ENCODE measurements at regions of chr3 and their contacts with region 1.

Region 1: GRCh38 chr3:157606011-157606851 is 103.0 kb upstream of the VEPH1 start:
- DNase-seq: peak; percentile 47
- H3K4me3 ChIP-seq: no peak overlapping the region
- H3K27ac ChIP-seq: no peak overlapping the region
- H3K4me1 ChIP-seq: no peaks in the 10 kb centered on the region
- H3K27me3 ChIP-seq: no peaks in the 10 kb centered on the region
- CTCF ChIP-seq: peak; percentile 70 to 86

Region 2: GRCh38 chr3:157417247-157417646 is 189.0 kb before region 1 on chr3:
- CTCF ChIA-PET with region 1: interaction called, 10 read pairs
- dilution Hi-C with region 1: no loop called
- in situ Hi-C with region 1: no loop called
- intact Hi-C with region 1: no loop called
- DNase-seq: no peak
- H3K4me3 ChIP-seq: no peak overlapping the region
- H3K27ac ChIP-seq: no peak overlapping the region
- H3K4me1 ChIP-seq: no peaks in the 10 kb centered on the region
- H3K27me3 ChIP-seq: peaks cover 2% of the 10 kb centered on the region
- CTCF ChIP-seq: no peak

Region 3: DNA sequence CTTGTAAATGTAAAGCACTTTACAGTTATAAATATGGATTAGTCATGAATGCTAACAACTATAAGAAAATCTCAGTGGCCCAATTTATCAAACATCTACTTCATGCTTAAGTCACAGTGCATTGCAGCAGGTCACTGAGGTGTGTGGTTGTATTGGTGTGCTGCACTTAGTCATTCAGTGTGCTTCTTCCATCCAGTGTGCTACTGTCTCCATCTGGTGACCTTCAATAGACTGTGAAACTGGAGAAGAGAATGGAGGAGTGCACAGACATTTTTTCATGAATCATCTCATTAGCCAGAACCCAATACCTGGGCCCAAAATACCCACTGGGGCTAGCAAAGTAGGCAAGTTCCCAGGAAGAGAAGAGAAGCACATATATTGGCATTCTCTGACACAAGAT is 300.4 kb after region 1 on chr3:
- CTCF ChIA-PET with region 1: no interaction called
- dilution Hi-C with region 1: no loop called
- in situ Hi-C with region 1: no loop called
- intact Hi-C with region 1: loop called (anchors 1 kb)
- DNase-seq: peak; percentile 6
- H3K4me3 ChIP-seq: no peak overlapping the region
- H3K27ac ChIP-seq: no peak overlapping the region
- H3K4me1 ChIP-seq: no peaks in the 10 kb centered on the region
- H3K27me3 ChIP-seq: no peaks in the 10 kb centered on the region
- CTCF ChIP-seq: peak in 1 of 2 donors; percentile 25

Region 4: GRCh38 chr3:158539414-158540014 is 933.3 kb after region 1 on chr3:
- CTCF ChIA-PET with region 1: interaction called, 3 read pairs
- dilution Hi-C with region 1: no loop called
- in situ Hi-C with region 1: loop called in 1 of 2 experiments (anchors 25 kb)
- intact Hi-C with region 1: no loop called
- DNase-seq: peak; percentile 12
- H3K4me3 ChIP-seq: no peak overlapping the region
- H3K27ac ChIP-seq: no peak overlapping the region
- H3K4me1 ChIP-seq: no peaks in the 10 kb centered on the region
- H3K27me3 ChIP-seq: no peaks in the 10 kb centered on the region
- CTCF ChIP-seq: peak; percentile 51 to 59

Measured in mammary epithelial cell (primary cell).